Dendritic cell treated with granulocyte-macrophage colony-stimulating factor and Interleukin-4, amounts not matched to agents 40 ng/mL and 50 ng/mL, for 4 days (primary cell): ENCODE measurements at regions of chr2 and their contacts with region 1.

Region 1: GRCh38 chr2:47323009-47323821 is 79.7 kb upstream of the MSH2 start:
- H3K4me3 Mint-ChIP-seq: no peak overlapping the region
- H3K27ac Mint-ChIP-seq: no peak overlapping the region
- H3K4me1 Mint-ChIP-seq: peaks cover 23% of the 10 kb centered on the region
- H3K27me3 Mint-ChIP-seq: no peaks in the 10 kb centered on the region

Region 2: DNA sequence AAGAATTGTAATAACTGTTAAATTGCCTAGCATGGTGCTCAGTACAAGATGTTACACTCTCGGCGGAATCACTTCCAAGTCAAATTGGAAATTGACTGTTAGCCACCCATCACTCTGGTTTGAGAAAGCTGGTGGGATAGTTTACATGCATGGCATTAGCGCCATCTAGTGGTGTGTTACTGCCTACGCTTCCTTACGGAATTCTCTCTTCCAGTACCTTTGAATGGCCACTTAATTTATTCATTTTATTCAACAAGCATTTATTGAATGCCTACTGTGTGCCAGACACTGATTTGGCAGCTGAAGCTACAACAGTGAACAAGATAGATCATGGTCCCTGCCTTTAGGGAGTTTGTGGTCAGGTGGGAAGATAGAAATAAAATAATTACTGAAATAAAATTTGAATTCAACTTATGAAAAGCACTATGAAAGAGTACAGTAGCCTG is 672.6 kb before region 1 on chr2:
- intact Hi-C with region 1: loop called (anchors 5 kb)
- H3K4me3 Mint-ChIP-seq: no peak overlapping the region
- H3K27ac Mint-ChIP-seq: no peak overlapping the region
- H3K4me1 Mint-ChIP-seq: peaks cover 16% of the 10 kb centered on the region
- H3K27me3 Mint-ChIP-seq: peaks cover 5% of the 10 kb centered on the region

Region 3: DNA sequence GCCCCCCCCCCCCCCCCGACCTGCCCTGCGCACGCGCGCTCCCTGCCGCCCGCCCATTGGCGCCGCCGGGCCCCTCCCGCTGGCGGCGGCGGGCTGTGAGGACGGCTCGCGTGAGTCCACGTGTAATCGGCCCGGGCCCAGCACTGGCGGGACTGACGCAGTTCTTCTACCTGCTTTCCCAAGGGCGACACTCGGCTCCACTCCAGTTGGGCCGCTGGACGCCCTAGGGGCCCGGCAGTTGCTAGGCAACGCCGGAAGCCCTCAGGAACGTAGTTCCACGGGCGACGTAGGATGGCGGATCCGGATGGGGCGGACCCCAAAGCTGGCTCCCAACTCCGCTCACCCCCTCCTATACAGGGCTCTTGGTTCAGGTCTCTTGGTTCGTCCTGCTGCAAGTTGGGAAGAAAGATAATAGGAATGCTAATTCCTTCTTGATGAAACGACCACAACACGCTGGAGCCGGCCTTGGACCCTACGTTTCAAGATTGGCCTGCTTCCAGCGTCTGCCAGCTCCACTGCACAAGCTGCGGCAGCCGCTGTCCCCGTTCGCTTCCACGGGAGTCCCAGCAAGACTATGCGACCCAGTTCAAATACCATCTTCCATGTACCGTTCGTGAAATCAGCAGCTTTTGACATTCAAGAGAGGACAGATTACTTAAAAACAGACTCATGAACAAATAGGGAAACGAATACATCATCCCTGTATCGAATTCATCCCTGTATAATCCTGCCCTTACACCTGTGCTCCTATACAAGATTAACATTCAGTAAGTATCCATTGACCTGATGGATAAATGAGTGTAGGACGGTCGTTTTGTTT is 407.2 kb before region 1 on chr2:
- intact Hi-C with region 1: loop called (anchors 2 kb)
- H3K4me3 Mint-ChIP-seq: peak overlapping the region; percentile 91
- H3K27ac Mint-ChIP-seq: peak overlapping the region; percentile 85
- H3K4me1 Mint-ChIP-seq: peaks cover 35% of the 10 kb centered on the region
- H3K27me3 Mint-ChIP-seq: no peaks in the 10 kb centered on the region

Region 4: GRCh38 chr2:47016172-47016913 is 306.9 kb before region 1 on chr2:
- intact Hi-C with region 1: loop called (anchors 10 kb)
- H3K4me3 Mint-ChIP-seq: no peak overlapping the region
- H3K27ac Mint-ChIP-seq: peak overlapping the region; percentile 68
- H3K4me1 Mint-ChIP-seq: peaks cover 56% of the 10 kb centered on the region
- H3K27me3 Mint-ChIP-seq: no peaks in the 10 kb centered on the region

Region 5: DNA sequence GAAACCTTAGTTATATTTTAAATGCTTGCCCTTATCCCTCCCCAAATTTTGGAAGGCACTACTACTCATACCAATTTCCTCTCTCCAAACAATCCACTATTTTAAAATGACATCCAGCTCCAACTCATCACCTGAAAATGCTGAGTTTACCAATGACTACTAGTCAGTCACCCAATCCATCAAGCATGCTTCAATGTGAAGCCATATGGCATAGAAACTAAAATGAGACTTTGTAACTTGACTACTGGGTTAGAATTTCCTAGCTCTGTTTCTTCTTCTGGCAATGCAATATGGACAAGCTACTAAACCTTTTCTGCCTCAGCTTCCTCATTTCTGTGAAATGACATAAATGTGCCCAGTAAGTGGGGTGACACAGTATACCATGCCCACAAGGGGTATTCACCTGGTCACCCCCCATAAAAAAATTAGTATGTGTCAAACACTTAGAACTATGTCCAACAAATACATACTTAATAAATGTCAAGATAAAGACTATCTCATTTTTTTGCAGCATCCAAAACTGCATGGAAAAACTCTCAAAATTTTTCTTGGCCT is 158.1 kb before region 1 on chr2:
- intact Hi-C with region 1: loop called (anchors 5 kb)
- H3K4me3 Mint-ChIP-seq: no peak overlapping the region
- H3K27ac Mint-ChIP-seq: peak overlapping the region; percentile 25
- H3K4me1 Mint-ChIP-seq: peaks cover 47% of the 10 kb centered on the region
- H3K27me3 Mint-ChIP-seq: no peaks in the 10 kb centered on the region

Region 6: DNA sequence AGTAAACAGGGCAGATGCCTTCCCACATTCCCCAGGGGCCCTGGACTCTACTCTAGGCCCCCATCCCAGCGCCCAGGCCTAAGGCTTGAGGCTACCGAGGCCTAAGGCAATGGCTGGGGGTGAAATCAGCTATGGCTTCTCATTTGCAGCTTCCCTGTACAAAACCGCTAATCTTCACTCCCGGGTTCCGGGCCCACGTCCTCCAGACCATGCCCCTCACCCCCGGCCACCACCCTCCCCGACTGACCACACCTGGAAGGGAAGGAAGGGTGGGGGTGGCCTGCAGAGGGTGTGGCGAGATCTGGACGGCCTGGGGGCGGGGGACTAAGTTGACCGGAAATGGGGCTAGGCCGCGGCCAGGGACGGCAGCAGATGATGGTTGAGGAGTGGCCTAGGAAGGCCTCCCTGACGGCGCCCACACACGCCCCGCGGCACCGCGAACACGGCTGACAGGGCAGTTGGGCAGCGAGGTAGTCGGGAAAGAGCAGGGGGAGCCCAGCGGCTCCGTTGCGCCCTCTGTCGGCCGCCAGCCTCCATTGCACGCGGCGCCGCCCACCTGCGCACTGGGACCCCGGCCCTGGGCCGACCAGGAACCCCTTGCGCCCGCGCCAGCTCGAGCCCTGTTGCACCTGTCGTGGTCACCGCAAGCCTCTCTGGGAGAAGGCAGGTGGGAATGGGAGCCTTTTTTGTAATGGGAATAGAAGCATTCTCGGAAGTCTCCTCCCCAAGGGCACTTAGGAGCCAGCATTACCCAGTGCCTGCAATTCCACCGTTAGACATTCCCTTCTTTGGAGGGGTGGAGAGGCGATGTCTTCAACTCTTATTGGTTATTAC is 51.0 kb before region 1 on chr2:
- intact Hi-C with region 1: loop called (anchors 5 kb)
- H3K4me3 Mint-ChIP-seq: peak overlapping the region; percentile 66
- H3K27ac Mint-ChIP-seq: peak overlapping the region; percentile 74
- H3K4me1 Mint-ChIP-seq: peaks cover 60% of the 10 kb centered on the region
- H3K27me3 Mint-ChIP-seq: no peaks in the 10 kb centered on the region